Psoas muscle (tissue), 8 donors: ENCODE measurements at regions of chr2 and their contacts with region 1.

Region 1: GRCh38 chr2:26985807-26986206 is 15.4 kb downstream of the MAPRE3 start:
- DNase-seq: no peak
- ATAC-seq: no peak
- H3K4me3 ChIP-seq: no peak overlapping the region
- H3K27ac ChIP-seq: no peak overlapping the region
- H3K4me1 ChIP-seq: peaks cover 55% of the 10 kb centered on the region
- H3K27me3 ChIP-seq: no peaks in the 10 kb centered on the region
- CTCF ChIP-seq: no peak

Region 2: DNA sequence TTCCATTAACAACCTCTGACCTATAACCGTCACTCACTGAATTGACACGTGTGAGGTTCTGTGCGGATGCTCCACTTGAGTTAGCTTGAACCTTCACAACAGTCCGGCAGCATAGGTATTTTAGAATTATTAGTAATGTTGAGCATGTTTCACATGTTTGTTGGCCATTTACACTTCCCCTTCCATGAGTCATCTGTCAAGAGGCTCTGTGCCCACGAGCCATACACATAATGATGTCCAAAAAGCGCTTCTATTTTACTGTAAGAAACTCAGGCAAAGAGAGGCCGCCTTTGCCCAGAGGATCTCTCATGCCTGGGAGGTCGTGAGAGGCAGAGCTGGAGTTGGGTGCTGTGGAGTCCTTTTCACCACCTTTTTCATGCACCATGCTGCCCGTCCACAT is 18.1 kb after region 1 on chr2:
- intact Hi-C with region 1: loop called in 1 of 2 experiments (anchors 2 kb)
- DNase-seq: no peak
- ATAC-seq: peak; percentile 35 to 66 (median 52)
- H3K4me3 ChIP-seq: no peak overlapping the region
- H3K27ac ChIP-seq: no peak overlapping the region
- H3K4me1 ChIP-seq: peaks cover 13% of the 10 kb centered on the region
- H3K27me3 ChIP-seq: no peaks in the 10 kb centered on the region
- CTCF ChIP-seq: no peak

Region 3: GRCh38 chr2:27582695-27583389 is 597.0 kb after region 1 on chr2 and contains the start of gene ZNF512:
- intact Hi-C with region 1: no loop called
- DNase-seq: peak; percentile 91 to 94
- ATAC-seq: peak; percentile 88 to 97 (median 96)
- H3K4me3 ChIP-seq: peak within 1 kb of the TSS; percentile 66
- H3K27ac ChIP-seq: peak within 1 kb of the TSS; percentile 51
- H3K4me1 ChIP-seq: peaks cover 11% of the 10 kb centered on the region
- H3K27me3 ChIP-seq: no peaks in the 10 kb centered on the region
- CTCF ChIP-seq: no peak
- total RNA-seq, gene ZNF512: 6.0 to 17.0 (median 12.8) TPM